ENCODE measurements at regions of chr1 and their contacts with region 1.

Region 1: DNA sequence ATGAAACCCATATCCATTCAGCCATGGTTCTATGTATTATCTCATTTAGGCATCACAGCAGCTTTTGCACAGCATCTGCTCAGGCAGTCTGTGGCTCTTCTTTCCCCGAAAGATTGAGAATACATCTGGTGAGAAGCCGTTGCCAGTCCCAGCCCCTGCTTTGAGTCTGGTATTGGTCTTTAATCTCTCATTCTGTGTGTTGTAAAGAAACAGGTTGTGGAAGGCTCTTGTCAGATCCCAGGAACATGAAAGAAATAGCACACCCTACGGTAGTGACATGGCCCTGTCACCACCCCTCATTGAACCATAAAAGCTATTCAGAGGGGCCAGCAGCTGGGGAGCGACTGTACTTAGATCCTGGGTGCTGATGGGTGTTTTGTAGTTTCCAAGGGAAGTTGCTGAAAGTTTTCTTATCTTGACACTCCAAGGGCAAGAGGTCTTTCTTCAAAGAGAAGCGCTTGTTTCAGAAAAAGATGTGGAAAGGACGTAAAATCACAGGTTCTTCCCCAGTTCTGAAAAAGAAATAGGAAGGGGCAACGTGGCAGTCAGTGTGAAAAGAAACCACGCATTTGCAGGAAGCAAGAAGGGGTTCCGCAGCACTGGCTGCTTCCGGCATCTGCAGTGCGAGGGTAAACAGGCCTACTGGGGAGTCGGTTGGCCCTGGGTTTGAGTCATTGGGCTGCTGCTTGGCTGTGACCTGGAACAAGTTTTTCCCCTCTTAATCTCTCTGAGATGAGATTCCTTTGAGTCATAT is 145.0 kb downstream of the DHRS3 start:
- DNase-seq: peak; percentile 61
- ATAC-seq: peak; percentile 78
- H3K4me3 ChIP-seq: peak overlapping the region in 3 of 5 experiments; percentile 29 to 47 (median 32)
- H3K4me3 Mint-ChIP-seq: peak overlapping the region; percentile 83
- H3K27ac ChIP-seq: peak overlapping the region; percentile 90 to 93
- H3K27ac Mint-ChIP-seq: peak overlapping the region; percentile 94
- H3K4me1 ChIP-seq: peaks cover 60 to 63% of the 10 kb centered on the region in 2 donors
- H3K4me1 Mint-ChIP-seq: peaks cover 65% of the 10 kb centered on the region
- H3K27me3 ChIP-seq: no peaks in the 10 kb centered on the region
- H3K27me3 Mint-ChIP-seq: no peaks in the 10 kb centered on the region
- CTCF ChIP-seq: no peak

Region 2: GRCh38 chr1:12485231-12486058 is 12.5 kb after region 1 on chr1:
- CTCF ChIA-PET with region 1: interaction called, 3 read pairs
- POLR2A ChIA-PET with region 1: no interaction called
- intact Hi-C with region 1: loop called (anchors 1 kb)
- DNase-seq: no peak
- ATAC-seq: no peak
- H3K4me3 ChIP-seq: no peak overlapping the region
- H3K4me3 Mint-ChIP-seq: no peak overlapping the region
- H3K27ac ChIP-seq: no peak overlapping the region
- H3K27ac Mint-ChIP-seq: no peak overlapping the region
- H3K4me1 ChIP-seq: peaks cover 16 to 25% of the 10 kb centered on the region in 2 donors
- H3K4me1 Mint-ChIP-seq: peaks cover 12% of the 10 kb centered on the region
- H3K27me3 ChIP-seq: no peaks in the 10 kb centered on the region
- H3K27me3 Mint-ChIP-seq: no peaks in the 10 kb centered on the region
- CTCF ChIP-seq: no peak